Activated B cell treated with CpG ODN at 0.5 μM for 24 hours (primary cell): ENCODE measurements at regions of chr18 and their contacts with region 1.

Region 1: GRCh38 chr18:12236934-12237832 is 17.0 kb upstream of the CIDEA start:
- DNase-seq: peak; percentile 68
- ATAC-seq: peak; percentile 93
- H3K4me3 Mint-ChIP-seq: peak overlapping the region; percentile 25
- H3K27ac Mint-ChIP-seq: no peak overlapping the region
- H3K4me1 Mint-ChIP-seq: peaks cover 7% of the 10 kb centered on the region
- H3K27me3 Mint-ChIP-seq: peaks cover 20% of the 10 kb centered on the region
- CTCF ChIP-seq: no peak

Region 2: GRCh38 chr18:12092398-12093229 is 144.6 kb before region 1 on chr18:
- CTCF ChIA-PET with region 1: no interaction called
- POLR2A ChIA-PET with region 1: no interaction called
- intact Hi-C with region 1: loop called (anchors 1 kb)
- DNase-seq: no peak
- ATAC-seq: no peak
- H3K4me3 Mint-ChIP-seq: no peak overlapping the region
- H3K27ac Mint-ChIP-seq: no peak overlapping the region
- H3K4me1 Mint-ChIP-seq: no peaks in the 10 kb centered on the region
- H3K27me3 Mint-ChIP-seq: no peaks in the 10 kb centered on the region
- CTCF ChIP-seq: no peak